CD8-positive, alpha-beta T cell (primary cell): ENCODE measurements at regions of chr1 and their contacts with region 1.

Region 1: DNA sequence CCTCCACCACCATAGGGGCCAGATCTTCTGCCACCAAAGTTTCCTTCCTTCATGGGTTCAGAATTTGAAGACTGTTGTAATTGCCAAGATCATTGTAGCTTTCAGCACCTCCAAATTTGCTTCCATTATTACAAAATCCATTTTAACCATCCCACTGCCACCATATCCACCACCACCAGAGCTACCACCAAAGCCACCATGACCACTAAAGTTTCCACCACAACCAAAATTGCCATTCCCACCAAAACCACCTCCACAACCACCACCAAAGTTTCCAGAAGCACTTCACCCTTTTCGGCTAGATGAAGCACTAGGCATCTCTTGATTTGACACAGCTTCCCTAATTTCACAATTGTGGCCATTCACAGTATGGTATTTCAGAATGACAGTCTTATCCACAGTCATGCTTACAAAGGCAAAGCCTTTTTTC is 45.2 kb downstream of the SLC30A7 start:
- DNase-seq: no peak
- ATAC-seq: no peak
- H3K4me3 ChIP-seq: no peak overlapping the region
- H3K4me3 Mint-ChIP-seq: no peak overlapping the region
- H3K27ac ChIP-seq: peak overlapping the region in 1 of 2 experiments; percentile 49
- H3K27ac Mint-ChIP-seq: peak overlapping the region; percentile 90
- H3K4me1 ChIP-seq: peaks cover 35% of the 10 kb centered on the region
- H3K4me1 Mint-ChIP-seq: peaks cover 61% of the 10 kb centered on the region
- H3K27me3 ChIP-seq: no peaks in the 10 kb centered on the region
- H3K27me3 Mint-ChIP-seq: no peaks in the 10 kb centered on the region
- CTCF ChIP-seq: no peak

Region 2: DNA sequence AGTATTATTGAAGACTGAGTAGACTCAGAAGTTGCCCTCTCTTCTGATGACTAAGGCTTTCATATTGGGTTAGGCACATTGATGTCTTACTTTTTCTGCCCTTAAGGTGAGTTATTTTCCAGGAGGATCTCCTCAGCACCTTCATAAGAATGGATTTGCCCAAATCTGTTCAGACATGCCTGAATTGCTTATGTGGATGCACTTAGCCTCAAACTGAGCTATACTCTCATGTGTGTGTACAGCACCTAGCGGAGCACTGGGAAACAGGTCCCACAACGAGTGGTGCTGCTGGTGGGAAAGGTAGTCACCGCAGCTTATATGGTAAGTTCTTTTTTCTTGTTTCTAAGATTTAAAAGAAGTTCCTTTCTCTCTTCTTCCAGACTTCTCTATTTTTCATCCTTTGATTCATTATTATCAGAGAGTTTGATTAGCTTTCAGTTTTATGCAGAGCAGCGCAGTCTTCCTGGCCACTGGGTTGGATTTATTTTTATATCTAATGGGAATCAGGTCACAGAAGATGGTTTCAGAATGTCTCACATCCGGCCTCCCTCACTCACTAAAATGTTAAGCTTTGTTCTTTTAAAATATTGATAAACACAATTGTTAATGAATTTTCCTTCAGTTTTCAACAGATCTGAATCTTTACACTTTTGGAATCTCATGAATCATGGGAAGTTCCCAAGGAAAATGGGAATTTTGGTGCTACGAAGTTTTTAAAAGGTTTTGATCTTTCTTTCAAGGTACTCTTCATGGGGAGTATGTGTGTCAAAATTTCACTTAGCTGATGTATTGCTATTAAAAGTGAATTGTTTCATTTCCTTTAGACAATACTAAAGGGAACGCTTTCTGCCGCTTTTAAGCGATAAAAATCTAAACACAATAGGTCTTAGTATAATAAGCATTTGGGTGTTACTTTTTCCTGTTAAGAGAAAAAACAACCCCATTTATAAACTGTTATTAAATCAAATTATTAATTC is 105.0 kb before region 1 on chr1:
- CTCF ChIA-PET with region 1: no interaction called
- POLR2A ChIA-PET with region 1: no interaction called
- intact Hi-C with region 1: no loop called
- DNase-seq: no peak
- ATAC-seq: no peak
- H3K4me3 ChIP-seq: no peak overlapping the region
- H3K4me3 Mint-ChIP-seq: no peak overlapping the region
- H3K27ac ChIP-seq: no peak overlapping the region
- H3K27ac Mint-ChIP-seq: no peak overlapping the region
- H3K4me1 ChIP-seq: no peaks in the 10 kb centered on the region
- H3K4me1 Mint-ChIP-seq: no peaks in the 10 kb centered on the region
- H3K27me3 ChIP-seq: no peaks in the 10 kb centered on the region
- H3K27me3 Mint-ChIP-seq: peaks cover 4% of the 10 kb centered on the region
- CTCF ChIP-seq: no peak

Region 3: GRCh38 chr1:100928128-100928527 is 13.0 kb before region 1 on chr1:
- CTCF ChIA-PET with region 1: interaction called, 14 read pairs
- POLR2A ChIA-PET with region 1: interaction called, 8 read pairs
- intact Hi-C with region 1: loop called in 1 of 2 experiments (anchors 2 kb)
- DNase-seq: peak in 3 of 9 experiments; percentile 19 to 65 (median 48)
- ATAC-seq: no peak
- H3K4me3 ChIP-seq: peak overlapping the region in 1 of 2 experiments; percentile 13
- H3K4me3 Mint-ChIP-seq: no peak overlapping the region
- H3K27ac ChIP-seq: peak overlapping the region; percentile 40 to 78
- H3K27ac Mint-ChIP-seq: no peak overlapping the region
- H3K4me1 ChIP-seq: peaks cover 85% of the 10 kb centered on the region
- H3K4me1 Mint-ChIP-seq: peaks cover 45% of the 10 kb centered on the region
- H3K27me3 ChIP-seq: no peaks in the 10 kb centered on the region
- H3K27me3 Mint-ChIP-seq: no peaks in the 10 kb centered on the region
- CTCF ChIP-seq: no peak

Region 4: DNA sequence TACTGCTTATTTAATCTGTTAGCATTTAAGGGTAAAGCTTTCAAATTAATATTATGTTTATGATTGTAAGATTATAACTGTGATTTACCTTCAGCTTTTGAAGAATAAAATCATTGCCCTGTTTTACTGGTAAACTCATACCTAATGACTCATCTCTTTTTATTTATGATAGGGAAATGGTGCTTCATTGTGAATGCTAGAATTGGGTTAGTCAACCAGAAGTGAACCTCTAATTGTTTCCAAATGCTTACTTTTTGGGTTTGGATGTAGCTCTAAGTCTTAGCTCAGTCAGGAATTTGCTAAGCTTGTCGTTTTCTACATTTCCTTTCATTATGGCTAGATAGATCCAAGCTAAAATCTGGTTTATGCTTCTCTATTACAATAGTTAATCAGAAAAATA is 14.2 kb after region 1 on chr1:
- CTCF ChIA-PET with region 1: interaction called, 4 read pairs
- POLR2A ChIA-PET with region 1: interaction called, 14 read pairs
- intact Hi-C with region 1: loop called in 1 of 2 experiments (anchors 2 kb)
- DNase-seq: no peak
- ATAC-seq: no peak
- H3K4me3 ChIP-seq: no peak overlapping the region
- H3K4me3 Mint-ChIP-seq: no peak overlapping the region
- H3K27ac ChIP-seq: no peak overlapping the region
- H3K27ac Mint-ChIP-seq: no peak overlapping the region
- H3K4me1 ChIP-seq: peaks cover 9% of the 10 kb centered on the region
- H3K4me1 Mint-ChIP-seq: peaks cover 55% of the 10 kb centered on the region
- H3K27me3 ChIP-seq: no peaks in the 10 kb centered on the region
- H3K27me3 Mint-ChIP-seq: no peaks in the 10 kb centered on the region
- CTCF ChIP-seq: no peak

Region 5: GRCh38 chr1:100972185-100972584 is 31.1 kb after region 1 on chr1:
- CTCF ChIA-PET with region 1: no interaction called
- POLR2A ChIA-PET with region 1: no interaction called
- intact Hi-C with region 1: loop called in 1 of 2 experiments (anchors 5 kb)
- DNase-seq: no peak
- ATAC-seq: no peak
- H3K4me3 ChIP-seq: no peak overlapping the region
- H3K4me3 Mint-ChIP-seq: no peak overlapping the region
- H3K27ac ChIP-seq: no peak overlapping the region
- H3K27ac Mint-ChIP-seq: peak overlapping the region; percentile 39
- H3K4me1 ChIP-seq: peaks cover 12% of the 10 kb centered on the region
- H3K4me1 Mint-ChIP-seq: peaks cover 61% of the 10 kb centered on the region
- H3K27me3 ChIP-seq: no peaks in the 10 kb centered on the region
- H3K27me3 Mint-ChIP-seq: no peaks in the 10 kb centered on the region
- CTCF ChIP-seq: no peak